Mammary epithelial cell (primary cell): ENCODE measurements at regions of chr6 and their contacts with region 1.

Region 1: GRCh38 chr6:91352878-91353277 is 766.0 kb upstream of the MAP3K7 start:
- DNase-seq: no peak
- H3K4me3 ChIP-seq: no peak overlapping the region
- H3K27ac ChIP-seq: no peak overlapping the region
- H3K4me1 ChIP-seq: no peaks in the 10 kb centered on the region
- H3K27me3 ChIP-seq: no peaks in the 10 kb centered on the region
- CTCF ChIP-seq: no peak

Region 2: DNA sequence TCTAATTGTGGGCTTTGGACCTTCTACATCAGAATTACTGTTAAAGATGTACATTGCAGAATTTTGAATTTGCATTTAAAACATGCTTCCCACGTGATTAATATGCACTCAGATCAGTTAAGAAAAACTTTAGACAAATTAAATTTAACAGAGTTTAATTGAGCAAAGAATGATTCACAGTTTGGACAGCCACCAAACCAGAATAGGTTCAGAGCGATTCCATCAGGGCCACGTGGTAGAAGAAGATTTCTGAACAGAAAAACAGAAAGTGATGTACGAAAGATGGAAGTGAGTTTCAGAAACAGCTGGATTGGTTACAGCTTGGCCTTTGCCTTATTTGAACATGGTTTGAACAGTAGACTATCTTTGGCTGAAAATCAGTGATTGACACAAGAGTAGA is 61.8 kb before region 1 on chr6:
- CTCF ChIA-PET with region 1: no interaction called
- dilution Hi-C with region 1: loop called (anchors 5 kb)
- in situ Hi-C with region 1: no loop called
- intact Hi-C with region 1: no loop called
- DNase-seq: no peak
- H3K4me3 ChIP-seq: no peak overlapping the region
- H3K27ac ChIP-seq: no peak overlapping the region
- H3K4me1 ChIP-seq: no peaks in the 10 kb centered on the region
- H3K27me3 ChIP-seq: no peaks in the 10 kb centered on the region
- CTCF ChIP-seq: no peak

Region 3: DNA sequence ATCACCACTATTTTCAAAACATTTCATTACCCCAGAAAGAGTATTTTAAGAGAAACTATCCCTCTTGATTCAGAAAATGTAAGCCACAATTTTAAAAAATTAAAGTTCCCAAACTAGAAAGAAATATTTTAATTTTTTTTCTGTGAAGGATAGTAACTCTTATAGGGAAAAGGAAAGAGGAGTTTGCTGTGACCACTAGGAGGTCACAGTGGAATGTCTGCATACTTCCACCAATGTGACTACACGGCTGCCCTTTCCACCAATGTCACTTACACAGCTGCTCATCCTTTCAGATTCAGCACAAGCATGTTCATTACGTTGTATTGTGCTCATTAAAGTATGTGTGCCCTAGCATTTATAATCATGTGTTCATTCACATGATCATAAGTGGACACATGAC is 168.4 kb after region 1 on chr6:
- CTCF ChIA-PET with region 1: no interaction called
- dilution Hi-C with region 1: no loop called
- in situ Hi-C with region 1: no loop called
- intact Hi-C with region 1: no loop called
- DNase-seq: no peak
- H3K4me3 ChIP-seq: no peak overlapping the region
- H3K27ac ChIP-seq: no peak overlapping the region
- H3K4me1 ChIP-seq: no peaks in the 10 kb centered on the region
- H3K27me3 ChIP-seq: no peaks in the 10 kb centered on the region
- CTCF ChIP-seq: no peak